Heart right ventricle (tissue), 16 donors: ENCODE measurements at regions of chr4 and their contacts with region 1.

Region 1: DNA sequence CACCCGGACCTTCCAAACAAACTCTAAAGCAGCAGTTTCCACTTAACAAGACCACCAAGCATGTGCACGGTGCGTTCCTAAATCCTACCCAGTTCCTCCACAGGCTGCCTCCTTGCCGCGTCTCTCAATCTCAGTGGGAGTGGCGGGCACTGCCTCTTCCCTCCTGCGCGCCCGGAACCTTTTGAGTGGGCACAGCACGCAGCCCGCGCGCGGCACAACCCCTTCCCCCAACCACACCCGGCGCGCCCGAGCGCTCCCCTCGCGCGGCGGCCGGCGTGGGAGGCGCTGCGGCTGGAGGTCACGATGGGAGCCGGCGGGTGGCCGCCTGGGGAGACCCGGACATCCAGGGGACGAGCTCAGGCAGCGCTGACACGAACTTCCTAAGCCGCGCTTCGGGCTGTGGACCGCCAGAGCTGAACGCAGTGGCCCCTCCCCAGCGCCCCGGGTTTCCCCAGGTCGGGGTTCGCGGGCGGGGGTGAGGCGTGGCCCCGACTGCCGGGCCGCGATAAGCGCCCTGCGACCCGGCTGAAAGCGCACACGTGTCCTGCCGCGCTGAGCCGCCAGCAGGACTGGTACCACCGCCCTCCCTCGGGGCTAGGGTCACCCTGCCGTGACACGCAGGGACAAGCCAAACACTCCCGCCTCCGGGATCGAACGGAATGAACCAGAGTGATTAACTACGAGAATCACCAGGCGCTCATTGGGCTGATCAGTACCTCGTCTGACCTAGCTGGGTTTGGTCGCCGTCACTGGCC is at the start of gene ABCG2:
- DNase-seq: peak; percentile 4 to 16
- ATAC-seq: peak; percentile 50 to 87 (median 54)
- H3K4me3 ChIP-seq: peak within 1 kb of the TSS; percentile 39 to 70 (median 66)
- H3K27ac ChIP-seq: peak within 1 kb of the TSS in 2 of 10 donors; percentile 11 to 25
- H3K4me1 ChIP-seq: peaks cover 0 to 12% (median 6%) of the 10 kb centered on the region in 9 donors
- H3K27me3 ChIP-seq: peaks cover 0 to 32% (median 0%) of the 10 kb centered on the region in 7 donors
- CTCF ChIP-seq: no peak
- total RNA-seq, gene ABCG2: 0.57 to 10.5 (median 4.1) TPM

Region 2: GRCh38 chr4:88110826-88111225 is 47.8 kb before region 1 on chr4:
- intact Hi-C with region 1: loop called in 1 of 10 experiments (anchors 5 kb)
- DNase-seq: no peak
- ATAC-seq: no peak
- H3K4me3 ChIP-seq: no peak overlapping the region
- H3K27ac ChIP-seq: no peak overlapping the region
- H3K4me1 ChIP-seq: peaks cover 0 to 17% (median 8%) of the 10 kb centered on the region in 9 donors
- H3K27me3 ChIP-seq: no peaks in the 10 kb centered on the region
- CTCF ChIP-seq: no peak